ENCODE measurements at regions of chr15 and their contacts with region 1.

Region 1: DNA sequence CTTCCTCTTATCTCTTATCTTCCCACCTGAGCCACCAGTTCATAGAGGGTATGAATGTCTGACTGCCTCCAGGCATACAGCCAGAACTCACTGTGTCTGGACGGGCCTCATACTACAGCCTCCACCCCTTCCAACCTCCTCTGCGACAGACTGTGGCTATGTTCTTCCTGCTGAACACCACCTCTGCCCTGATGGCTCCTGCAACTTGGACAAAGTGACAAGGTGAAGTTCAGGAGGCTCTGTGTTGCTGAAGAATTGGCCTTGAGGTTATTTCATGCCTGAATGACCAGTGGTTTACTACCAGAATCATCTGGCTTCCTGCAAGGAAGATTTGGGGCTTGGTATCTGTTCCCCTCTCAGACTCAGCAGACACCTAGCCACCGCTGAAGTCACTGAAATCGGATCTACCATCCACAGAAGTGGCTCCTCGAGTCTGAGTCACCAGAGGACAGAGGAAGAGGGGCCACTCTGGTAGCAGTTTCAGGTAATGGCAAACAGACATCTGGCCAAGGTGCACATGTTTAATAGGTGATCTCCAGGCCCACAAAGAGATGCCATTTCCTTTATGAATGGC is 14.2 kb upstream of the ULK3 start:
- DNase-seq: no peak
- ATAC-seq: peak; percentile 43
- H3K4me3 Mint-ChIP-seq: peak overlapping the region; percentile 27
- H3K27ac Mint-ChIP-seq: peak overlapping the region; percentile 79
- H3K4me1 Mint-ChIP-seq: peaks cover 34% of the 10 kb centered on the region
- H3K27me3 Mint-ChIP-seq: no peaks in the 10 kb centered on the region

Region 2: DNA sequence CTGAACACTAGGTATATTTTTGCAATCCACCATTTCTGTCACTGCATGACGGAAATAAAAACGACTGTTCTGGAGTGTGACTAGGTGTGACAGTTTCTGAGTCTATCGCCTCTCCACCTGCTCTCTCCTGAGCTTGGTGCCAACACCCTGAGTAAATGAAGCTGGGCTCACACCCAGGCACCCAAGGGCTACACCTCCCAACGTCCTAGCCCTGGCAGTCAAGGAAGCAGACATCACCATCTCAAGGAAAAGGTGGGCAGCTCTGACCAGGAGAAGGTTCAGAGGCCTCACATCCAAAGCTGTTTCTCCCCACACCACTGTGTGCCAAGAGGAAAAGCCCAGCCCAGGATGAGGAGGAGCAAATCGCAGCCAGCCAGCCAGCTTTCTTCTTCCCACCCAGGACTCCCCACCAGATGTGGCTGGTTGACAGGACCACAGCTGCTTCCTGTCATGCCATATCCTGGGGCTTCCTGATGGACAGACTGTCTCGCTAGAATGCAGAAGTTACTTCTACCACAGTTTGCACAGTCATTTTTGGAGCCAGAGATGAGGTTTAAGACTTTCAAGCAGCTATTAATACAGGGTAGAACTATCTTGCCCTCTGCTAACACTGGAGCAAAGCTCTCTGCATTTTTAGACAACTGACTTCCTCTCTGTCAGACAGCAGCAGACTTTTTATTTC is 12.7 kb after region 1 on chr15:
- POLR2A ChIA-PET with region 1: interaction called, 15 read pairs
- DNase-seq: no peak
- ATAC-seq: peak; percentile 30
- H3K4me3 Mint-ChIP-seq: peak overlapping the region; percentile 95
- H3K27ac Mint-ChIP-seq: peak overlapping the region; percentile 87
- H3K4me1 Mint-ChIP-seq: peaks cover 57% of the 10 kb centered on the region
- H3K27me3 Mint-ChIP-seq: no peaks in the 10 kb centered on the region

Region 3: DNA sequence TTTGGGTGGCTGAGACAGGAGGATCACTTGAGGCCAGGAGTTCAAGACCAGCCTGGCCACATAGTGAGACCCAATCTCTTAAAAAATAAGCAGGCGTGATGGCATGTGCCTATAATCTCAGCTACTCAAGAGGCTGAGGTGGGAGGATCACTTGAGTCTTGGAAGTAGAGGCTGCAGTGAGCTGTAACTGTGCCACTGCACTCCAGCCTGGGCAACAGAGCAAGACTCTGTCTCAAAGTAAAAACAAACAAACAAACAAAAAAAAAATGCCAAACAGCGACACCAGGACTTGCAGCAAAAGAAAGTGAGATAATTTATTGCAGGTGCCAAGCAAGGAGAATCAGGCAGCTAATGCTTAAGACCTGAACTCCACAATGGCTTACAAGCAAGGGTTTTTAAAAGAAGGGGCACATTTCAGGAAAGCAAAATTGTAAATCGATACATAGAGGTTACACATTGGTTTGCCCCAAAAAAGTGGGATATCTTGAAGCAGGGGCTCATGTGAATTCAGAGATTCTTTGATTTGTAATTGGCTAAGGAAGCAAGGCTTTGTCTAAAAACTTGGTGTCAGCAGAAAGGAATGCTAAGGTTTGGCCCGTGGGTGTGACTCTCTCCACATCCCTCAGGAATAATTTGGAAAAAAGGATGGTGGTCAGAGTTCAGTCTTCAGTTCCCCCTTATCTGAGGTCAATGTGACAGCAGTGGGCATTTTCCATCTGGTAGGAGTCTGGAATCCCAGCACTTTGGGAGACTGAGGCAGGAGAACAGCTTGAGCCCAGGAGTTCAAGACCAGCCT is 27.5 kb after region 1 on chr15:
- POLR2A ChIA-PET with region 1: no interaction called
- DNase-seq: no peak
- ATAC-seq: no peak
- H3K4me3 Mint-ChIP-seq: no peak overlapping the region
- H3K27ac Mint-ChIP-seq: no peak overlapping the region
- H3K4me1 Mint-ChIP-seq: peaks cover 18% of the 10 kb centered on the region
- H3K27me3 Mint-ChIP-seq: peaks cover 3% of the 10 kb centered on the region

Measured in activated naive CD8-positive, alpha-beta T cell treated with anti-CD3 and anti-CD28 coated beads, Interleukin-2, amount 10 ng/mL, durations not matched to agents 7 days and 5 days (primary cell).